ENCODE measurements at regions of chr7 and their contacts with region 1.

Region 1: GRCh38 chr7:4725014-4725849 is 43.1 kb downstream of the FOXK1 start:
- DNase-seq: peak; percentile 89

Region 2: DNA sequence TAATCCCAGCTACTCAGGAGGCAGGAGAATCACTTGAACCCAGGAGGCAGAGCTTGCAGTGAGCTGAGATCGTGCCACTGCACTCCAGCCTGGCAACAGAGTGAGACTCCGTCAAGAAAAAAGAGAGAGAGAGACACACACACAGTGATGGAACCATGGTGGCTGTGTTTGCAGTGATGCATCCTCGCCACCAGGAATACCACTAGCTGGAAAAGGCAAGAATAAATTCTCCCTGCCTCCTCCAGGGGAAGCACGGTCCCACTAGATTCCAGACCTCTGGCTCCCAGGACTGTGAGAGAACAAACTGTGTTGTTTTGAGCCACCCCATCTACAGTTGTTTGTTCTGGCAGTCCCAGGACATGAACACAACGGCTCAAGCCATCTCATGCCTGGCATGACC is 363.5 kb before region 1 on chr7:
- intact Hi-C with region 1: no loop called
- DNase-seq: no peak

Region 3: DNA sequence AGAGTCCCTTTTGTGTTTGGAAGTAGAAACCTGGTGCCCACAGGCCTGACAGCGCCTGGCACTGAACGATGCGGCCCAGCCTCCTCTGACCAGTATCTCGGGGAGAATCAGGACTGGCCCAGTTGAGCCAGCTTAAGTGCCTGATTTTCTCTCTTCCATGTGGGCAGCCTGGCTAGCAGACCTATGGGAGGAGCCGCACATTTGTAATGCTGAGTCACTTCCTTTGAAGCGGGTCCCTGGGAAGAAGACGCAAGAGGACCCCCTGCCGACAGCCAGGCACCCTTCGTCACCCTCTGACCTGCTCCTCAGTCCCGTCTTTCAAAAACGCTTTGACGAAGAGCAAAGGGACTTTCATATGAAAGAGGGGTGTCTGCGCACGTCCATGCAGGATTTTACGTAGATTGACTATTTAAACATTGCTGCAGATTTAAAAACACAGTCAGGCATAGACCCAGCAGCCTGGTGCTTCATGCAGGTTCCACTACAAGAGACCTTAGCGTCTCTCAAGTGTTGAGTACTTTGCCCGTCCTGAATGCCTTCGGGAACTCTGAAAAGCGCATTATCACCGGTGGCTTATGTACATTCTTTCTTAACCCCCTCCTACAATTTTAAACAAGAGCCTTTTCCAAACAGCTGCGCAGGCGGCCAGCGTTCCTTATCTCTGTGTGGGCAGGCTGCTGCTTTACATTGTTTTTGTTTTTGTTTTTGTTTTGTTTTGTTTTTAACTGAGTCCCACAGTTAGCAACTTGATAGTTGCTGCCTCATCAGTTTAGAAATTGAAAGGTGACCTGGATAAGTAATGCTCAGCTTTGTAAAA is 13.7 kb after region 1 on chr7:
- intact Hi-C with region 1: loop called (anchors 2 kb)
- DNase-seq: no peak

Region 4: DNA sequence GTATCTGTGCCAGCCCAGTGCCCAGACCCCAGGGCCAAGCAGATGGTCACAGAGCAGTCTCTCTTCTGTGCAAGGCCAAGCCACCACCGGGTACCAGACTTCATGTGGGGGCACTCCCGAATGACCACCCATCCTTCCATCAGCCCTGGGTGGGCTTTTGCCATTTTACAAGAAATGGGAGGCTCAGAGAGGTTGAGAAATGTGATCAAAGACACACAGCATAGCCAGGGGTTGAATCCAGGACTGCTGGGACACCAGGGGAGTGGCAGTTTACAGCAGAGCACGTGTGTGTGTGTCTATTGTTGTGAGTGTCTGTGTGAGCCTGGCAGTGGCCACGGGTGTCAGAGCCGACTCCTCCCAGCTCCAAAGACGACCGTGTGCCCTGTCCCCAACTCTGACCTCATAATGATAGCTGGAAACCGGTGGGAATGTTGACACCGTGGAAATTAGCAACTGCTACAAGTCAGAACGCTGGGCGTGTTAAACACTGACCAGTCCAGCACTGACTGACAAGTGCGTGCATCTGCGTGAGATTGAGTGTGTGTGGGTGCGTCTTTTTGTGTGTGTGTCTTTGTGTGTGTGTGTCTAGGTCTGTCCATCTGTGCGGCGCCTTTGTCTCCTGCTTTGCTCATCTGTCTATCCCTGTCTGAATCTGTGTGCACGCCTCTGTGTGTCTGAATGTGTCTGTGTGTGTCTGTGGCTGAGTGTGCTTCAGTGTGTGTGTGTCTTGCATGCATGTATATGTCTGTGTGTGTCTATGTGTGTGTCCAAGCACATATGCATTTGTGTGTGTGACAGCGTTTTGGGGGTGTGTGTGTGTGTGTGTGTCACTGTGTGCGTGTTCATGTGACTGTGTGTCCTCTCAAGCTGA is 540.3 kb after region 1 on chr7:
- intact Hi-C with region 1: no loop called
- DNase-seq: no peak